ENCODE measurements at regions of chr4 and their contacts with region 1.

Region 1: GRCh38 chr4:37603070-37603468 is 83.1 kb downstream of the RELL1 start:
- DNase-seq: peak; percentile 83 to 88 (median 87)
- ATAC-seq: peak; percentile 94 to 98 (median 96)
- H3K4me3 ChIP-seq: no peak overlapping the region
- H3K27ac ChIP-seq: no peak overlapping the region
- H3K4me1 ChIP-seq: peaks cover 0 to 34% (median 5%) of the 10 kb centered on the region in 4 donors
- H3K27me3 ChIP-seq: no peaks in the 10 kb centered on the region
- CTCF ChIP-seq: peak; percentile 96 to 98 (median 97)
- POLR2A ChIP-seq: no peak

Region 2: DNA sequence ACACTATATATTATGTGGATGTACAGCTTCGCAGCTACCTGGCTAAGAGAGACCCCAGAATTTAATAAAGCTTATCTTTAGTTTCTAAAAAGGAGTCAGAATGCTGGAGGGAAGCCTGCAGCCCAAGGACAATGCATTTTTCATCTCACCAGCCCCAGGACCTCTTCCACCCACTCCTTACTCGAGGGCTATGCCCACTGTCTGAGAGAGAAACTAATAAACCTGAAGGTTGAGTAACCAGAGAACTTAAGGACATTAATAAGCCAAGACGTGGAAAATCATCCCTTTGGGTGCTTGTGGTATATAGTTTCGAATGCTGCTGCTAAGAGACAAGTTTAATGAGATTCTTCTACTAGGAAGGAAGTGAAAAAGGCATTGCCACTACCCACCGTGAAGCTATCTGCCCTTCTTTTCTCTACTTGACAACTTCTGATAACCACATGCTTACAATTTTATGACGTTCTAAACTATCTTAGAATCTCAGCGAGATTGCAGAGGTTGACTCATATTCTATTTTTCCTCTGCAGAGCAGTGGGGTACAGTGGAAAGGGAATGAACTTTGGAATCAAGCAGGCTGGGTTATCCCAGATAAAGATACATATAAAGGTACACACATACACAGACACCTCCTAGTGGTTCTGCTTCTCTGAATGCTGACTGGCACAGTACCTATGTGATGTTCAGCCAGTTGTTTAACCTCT is 79.8 kb after region 1 on chr4:
- intact Hi-C with region 1: loop called in 1 of 2 experiments (anchors 5 kb)
- DNase-seq: no peak
- ATAC-seq: peak; percentile 14 to 32 (median 22)
- H3K4me3 ChIP-seq: no peak overlapping the region
- H3K27ac ChIP-seq: peak overlapping the region; percentile 36 to 50 (median 40)
- H3K4me1 ChIP-seq: peaks cover 0 to 28% (median 2%) of the 10 kb centered on the region in 4 donors
- H3K27me3 ChIP-seq: no peaks in the 10 kb centered on the region
- CTCF ChIP-seq: peak; percentile 45 to 61 (median 52)
- POLR2A ChIP-seq: no peak

Region 3: DNA sequence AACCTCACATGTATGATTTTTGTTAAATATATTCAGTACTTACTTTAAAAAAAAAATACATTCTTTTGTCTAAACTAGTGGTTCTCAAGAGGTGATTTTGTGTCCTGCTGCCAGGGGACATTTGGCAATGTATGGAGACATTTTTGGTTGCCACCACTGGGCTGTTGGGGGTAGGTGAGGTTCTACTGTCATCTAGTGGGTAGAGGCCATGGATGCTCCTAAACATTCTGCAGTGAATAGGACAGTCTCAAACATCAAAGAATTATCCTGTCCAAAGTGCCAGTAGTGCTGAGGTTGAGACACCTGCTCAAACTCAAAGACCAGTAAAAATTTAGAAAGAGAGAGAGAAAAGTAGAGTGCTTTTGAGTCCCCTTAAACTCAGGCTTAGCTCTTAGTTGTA is 190.5 kb after region 1 on chr4:
- intact Hi-C with region 1: loop called (anchors 10 kb)
- DNase-seq: no peak
- ATAC-seq: peak; percentile 78 to 92 (median 84)
- H3K4me3 ChIP-seq: no peak overlapping the region
- H3K27ac ChIP-seq: no peak overlapping the region
- H3K4me1 ChIP-seq: no peaks in the 10 kb centered on the region
- H3K27me3 ChIP-seq: no peaks in the 10 kb centered on the region
- CTCF ChIP-seq: peak; percentile 46 to 73 (median 51)
- POLR2A ChIP-seq: no peak

Measured in right lobe of liver (tissue), 6 donors.